Transverse colon (tissue), 4 donors: ENCODE measurements at regions of chr1 and their contacts with region 1.

Region 1: DNA sequence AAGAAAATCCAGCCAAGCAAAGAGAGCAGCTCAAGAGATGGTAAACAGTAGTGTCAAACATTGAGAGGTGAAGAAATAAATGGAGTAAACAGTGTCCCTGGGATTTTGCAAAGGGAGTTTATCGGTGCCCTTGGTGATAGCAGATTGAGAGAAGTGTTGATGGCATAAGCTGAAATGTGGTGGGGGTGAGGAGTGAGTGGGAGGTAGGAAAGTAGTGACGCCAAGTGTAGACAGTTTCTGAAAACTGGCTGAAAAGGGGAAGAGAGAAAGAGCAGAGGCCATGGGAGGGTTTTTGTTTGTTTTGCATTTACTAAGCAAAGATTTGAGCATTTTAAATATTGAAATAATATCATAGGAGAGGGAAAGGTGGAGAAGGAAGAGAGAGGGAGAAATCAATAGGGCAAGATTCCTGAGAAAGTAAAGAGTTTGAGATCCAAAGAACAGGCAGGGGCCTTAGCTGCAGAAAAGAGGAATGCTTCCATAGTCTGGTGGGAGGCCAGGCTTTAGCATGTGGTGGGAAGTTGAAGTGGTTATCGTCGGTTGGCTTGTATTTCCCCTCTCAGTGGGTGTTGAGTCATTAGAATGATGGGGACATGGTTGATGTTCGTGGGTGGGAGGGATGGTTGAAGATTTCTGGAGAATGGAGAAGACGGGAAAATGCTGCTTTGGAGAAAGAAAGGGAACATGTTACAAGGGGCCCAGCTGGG is 26.8 kb upstream of the RASAL2 start:
- DNase-seq: no peak
- H3K4me3 ChIP-seq: no peak overlapping the region
- H3K27ac ChIP-seq: no peak overlapping the region
- H3K4me1 ChIP-seq: peaks cover 0 to 7% (median 0%) of the 10 kb centered on the region in 4 donors
- H3K27me3 ChIP-seq: no peaks in the 10 kb centered on the region
- CTCF ChIP-seq: no peak
- EP300 ChIP-seq: no peak
- POLR2A ChIP-seq: no peak

Region 2: DNA sequence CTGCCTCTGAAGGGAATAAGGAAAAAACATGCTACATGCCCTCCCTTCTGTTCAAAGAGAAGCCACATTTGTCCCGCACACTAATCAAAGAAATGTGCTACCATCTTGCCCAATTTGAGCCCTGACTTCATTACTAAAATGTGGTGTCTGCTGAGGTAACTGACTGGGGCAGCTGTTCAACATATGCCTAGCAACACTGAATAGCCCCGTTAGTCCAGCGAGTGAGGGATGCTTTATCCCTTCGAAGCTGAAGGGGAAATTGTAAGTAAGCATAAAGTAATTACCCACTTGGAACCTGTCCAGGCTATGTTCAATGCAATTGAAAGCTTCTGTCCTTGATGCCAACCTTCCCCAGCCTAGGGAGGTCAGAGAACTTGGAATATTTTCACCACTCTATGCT is 407.8 kb before region 1 on chr1:
- in situ Hi-C with region 1: no loop called
- intact Hi-C with region 1: no loop called
- DNase-seq: no peak
- H3K4me3 ChIP-seq: no peak overlapping the region
- H3K27ac ChIP-seq: no peak overlapping the region
- H3K4me1 ChIP-seq: no peaks in the 10 kb centered on the region
- H3K27me3 ChIP-seq: no peaks in the 10 kb centered on the region
- CTCF ChIP-seq: no peak
- EP300 ChIP-seq: no peak
- POLR2A ChIP-seq: no peak

Region 3: DNA sequence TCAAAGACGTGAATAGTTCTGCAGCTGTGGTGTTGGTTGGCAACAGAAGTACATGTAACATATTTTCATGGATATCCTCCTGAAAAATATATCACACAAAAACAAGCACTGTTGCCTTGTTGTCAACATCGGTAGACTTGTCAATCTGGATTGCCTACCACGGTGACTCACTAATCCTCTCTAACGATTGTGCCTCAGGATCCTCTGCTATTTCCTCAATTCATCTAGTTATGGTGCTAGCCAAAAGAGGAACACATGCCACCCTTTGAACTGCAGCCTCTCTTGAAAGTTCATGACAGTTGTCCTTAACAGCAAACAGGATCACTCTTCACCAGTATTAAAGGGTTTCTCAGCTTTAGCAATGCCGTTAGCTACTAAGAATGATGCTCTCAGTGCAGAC is 52.6 kb after region 1 on chr1:
- in situ Hi-C with region 1: no loop called
- intact Hi-C with region 1: loop called (anchors 5 kb)
- DNase-seq: no peak
- H3K4me3 ChIP-seq: no peak overlapping the region
- H3K27ac ChIP-seq: no peak overlapping the region
- H3K4me1 ChIP-seq: peaks cover 0 to 12% (median 0%) of the 10 kb centered on the region in 4 donors
- H3K27me3 ChIP-seq: no peaks in the 10 kb centered on the region
- CTCF ChIP-seq: no peak
- EP300 ChIP-seq: no peak
- POLR2A ChIP-seq: no peak